GM10248 (cell line): ENCODE measurements at regions of chr9 and their contacts with region 1.

Region 1: DNA sequence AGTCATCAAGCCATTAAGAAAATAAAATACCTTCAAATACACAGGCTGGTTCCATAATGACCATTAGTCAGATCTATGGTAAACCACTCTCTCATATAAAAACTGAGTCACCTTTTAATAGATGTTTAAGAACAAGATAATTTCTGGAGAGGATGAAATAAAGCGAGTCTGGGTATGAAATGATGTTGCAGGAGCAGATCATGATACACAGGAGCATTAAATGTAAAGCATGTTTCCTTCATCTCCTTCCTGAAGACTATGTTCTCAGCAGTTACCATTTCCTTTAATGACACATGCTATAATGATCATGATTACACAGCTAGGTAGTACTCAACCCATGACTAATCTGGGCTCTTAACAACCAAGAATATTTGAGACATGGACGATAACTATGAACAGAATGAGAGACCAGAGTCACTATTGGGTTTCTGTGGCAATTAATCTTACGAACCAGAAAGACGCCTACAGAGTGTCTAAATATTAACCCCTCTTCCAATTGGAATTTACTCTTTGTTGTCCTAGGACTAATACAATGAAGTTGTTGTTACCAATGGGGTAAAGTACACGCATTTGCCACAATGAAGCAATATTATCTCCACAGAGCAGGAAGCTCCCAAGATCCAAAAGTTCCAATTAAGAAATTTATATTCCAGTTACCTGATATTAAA is 105.6 kb downstream of the NR6A1 start:
- DNase-seq: no peak
- CTCF ChIP-seq: no peak

Region 2: GRCh38 chr9:124652203-124652992 is 13.1 kb before region 1 on chr9:
- CTCF ChIA-PET with region 1: interaction called, 10 read pairs
- POLR2A ChIA-PET with region 1: no interaction called
- DNase-seq: no peak
- CTCF ChIP-seq: no peak

Region 3: GRCh38 chr9:124697326-124698200 is 32.0 kb after region 1 on chr9:
- CTCF ChIA-PET with region 1: no interaction called
- POLR2A ChIA-PET with region 1: no interaction called
- DNase-seq: no peak
- CTCF ChIP-seq: no peak